ENCODE measurements at regions of chr14 and their contacts with region 1.

Region 1: DNA sequence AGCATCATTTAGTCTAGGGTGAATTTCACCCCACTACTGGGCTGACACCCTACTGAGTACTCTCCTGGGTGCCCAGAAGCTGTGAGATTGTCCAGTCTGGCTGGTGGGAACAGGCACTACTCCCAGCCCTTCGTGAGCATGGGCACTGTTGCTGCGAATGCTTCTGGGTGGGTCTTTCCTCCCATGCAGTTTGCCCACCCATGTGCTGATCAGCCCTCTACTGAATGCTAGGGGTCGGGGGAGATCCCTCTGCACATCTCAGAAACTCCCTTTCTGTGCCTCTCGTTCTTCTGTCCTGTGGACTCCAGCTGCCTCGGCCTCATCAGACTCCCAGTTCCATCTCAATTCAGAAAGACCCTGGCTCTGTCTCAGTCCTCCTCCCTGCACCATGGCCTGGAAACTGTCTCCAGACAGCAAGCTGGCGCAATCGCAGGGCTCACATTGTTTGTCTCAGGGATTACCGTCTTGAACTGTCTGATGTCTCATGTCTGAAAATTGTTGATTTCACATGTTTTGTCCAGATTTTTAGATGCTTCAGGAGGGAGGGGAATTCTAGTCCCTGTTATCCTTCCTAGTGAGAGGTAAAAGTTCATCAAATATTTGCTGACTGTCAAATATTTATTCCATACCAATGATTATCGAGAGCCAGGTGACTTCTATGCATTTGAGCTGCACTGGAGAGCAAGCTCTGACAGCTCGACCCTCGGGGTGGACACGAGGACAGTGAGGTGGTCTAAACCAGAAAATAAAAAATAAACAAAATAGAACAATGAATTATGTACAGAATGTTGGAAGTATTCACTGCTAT is 316.6 kb upstream of the RTL1 start:
- DNase-seq: no peak
- H3K4me3 ChIP-seq: no peak overlapping the region
- H3K27ac ChIP-seq: no peak overlapping the region
- H3K27me3 ChIP-seq: peaks cover 51% of the 10 kb centered on the region
- CTCF ChIP-seq: no peak

Region 2: DNA sequence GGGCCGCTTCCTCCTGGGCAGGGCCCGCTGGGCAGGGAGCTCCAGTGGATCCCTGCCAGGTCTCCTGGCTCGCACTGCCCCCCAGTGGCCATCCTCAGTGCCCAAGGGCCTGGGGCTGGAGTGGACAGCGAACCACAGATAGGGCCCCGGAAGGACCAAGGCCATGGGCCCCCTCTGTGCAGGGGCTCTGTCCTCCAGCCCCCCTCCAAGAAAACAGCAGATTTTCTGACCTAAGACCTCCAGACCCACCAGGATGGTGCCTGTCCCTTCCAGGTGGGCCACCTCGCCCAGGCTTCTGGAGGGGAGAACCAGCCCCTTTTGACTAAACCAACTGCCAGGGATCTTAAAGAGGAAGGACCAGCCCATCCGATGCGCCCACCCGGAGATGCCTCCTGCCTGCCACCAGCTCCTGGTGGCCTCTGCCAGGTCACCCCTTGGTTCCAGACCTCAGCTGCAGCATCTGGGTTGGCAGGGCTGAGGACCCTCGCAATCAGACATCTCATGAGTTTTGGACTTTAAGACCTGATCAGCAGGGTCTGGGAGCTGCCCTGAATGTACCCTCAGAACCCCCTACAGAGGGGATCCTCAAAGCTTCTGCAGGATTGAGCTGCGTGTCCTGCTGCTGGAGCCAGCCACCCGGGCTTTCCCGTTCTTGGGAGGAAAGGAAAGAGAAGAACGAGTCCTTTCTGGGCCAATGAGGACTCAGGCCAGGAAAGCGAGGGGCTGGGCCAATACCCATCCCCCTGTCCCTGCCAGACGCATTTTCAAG is 15.4 kb after region 1 on chr14:
- CTCF ChIA-PET with region 1: interaction called, 10 read pairs
- POLR2A ChIA-PET with region 1: no interaction called
- DNase-seq: no peak
- H3K4me3 ChIP-seq: no peak overlapping the region
- H3K27ac ChIP-seq: no peak overlapping the region
- H3K27me3 ChIP-seq: peaks cover 8% of the 10 kb centered on the region
- CTCF ChIP-seq: peak; percentile 82

Measured in AG04450 (cell line).